B cell (primary cell): ENCODE measurements at regions of chr7 and their contacts with region 1.

Region 1: GRCh38 chr7:120805636-120806388 is 52.1 kb downstream of the TSPAN12 start:
- DNase-seq: peak; percentile 68
- ATAC-seq: no peak
- H3K4me3 ChIP-seq: no peak overlapping the region
- H3K4me3 Mint-ChIP-seq: no peak overlapping the region
- H3K27ac ChIP-seq: no peak overlapping the region
- H3K27ac Mint-ChIP-seq: no peak overlapping the region
- H3K4me1 ChIP-seq: no peaks in the 10 kb centered on the region
- H3K4me1 Mint-ChIP-seq: no peaks in the 10 kb centered on the region
- H3K27me3 ChIP-seq: no peaks in the 10 kb centered on the region
- H3K27me3 Mint-ChIP-seq: peaks cover 5% of the 10 kb centered on the region
- CTCF ChIP-seq: peak; percentile 95

Region 2: DNA sequence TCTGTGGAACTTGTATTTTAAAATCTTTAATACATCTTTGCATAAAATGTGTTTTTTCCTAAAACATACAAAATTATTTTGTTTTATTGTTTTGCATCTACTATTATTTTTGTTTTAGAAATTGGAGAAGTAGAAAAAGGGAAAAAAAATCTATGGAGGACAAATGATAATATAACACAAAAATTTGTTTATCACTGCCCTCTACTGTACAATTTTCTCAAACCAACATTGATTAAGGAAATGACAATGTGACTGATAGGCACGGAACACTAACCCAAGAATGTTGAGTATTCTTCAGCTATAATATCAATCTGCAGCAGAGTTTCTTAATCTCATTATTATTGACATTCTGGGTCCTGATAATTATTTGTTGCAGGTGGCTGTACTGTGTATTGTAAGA is 135.3 kb after region 1 on chr7:
- CTCF ChIA-PET with region 1: interaction called, 4 read pairs
- POLR2A ChIA-PET with region 1: no interaction called
- intact Hi-C with region 1: loop called (anchors 1 kb)
- DNase-seq: peak; percentile 36
- ATAC-seq: no peak
- H3K4me3 ChIP-seq: no peak overlapping the region
- H3K4me3 Mint-ChIP-seq: no peak overlapping the region
- H3K27ac ChIP-seq: no peak overlapping the region
- H3K27ac Mint-ChIP-seq: no peak overlapping the region
- H3K4me1 ChIP-seq: no peaks in the 10 kb centered on the region
- H3K4me1 Mint-ChIP-seq: no peaks in the 10 kb centered on the region
- H3K27me3 ChIP-seq: no peaks in the 10 kb centered on the region
- H3K27me3 Mint-ChIP-seq: peaks cover 4% of the 10 kb centered on the region
- CTCF ChIP-seq: peak; percentile 36

Region 3: DNA sequence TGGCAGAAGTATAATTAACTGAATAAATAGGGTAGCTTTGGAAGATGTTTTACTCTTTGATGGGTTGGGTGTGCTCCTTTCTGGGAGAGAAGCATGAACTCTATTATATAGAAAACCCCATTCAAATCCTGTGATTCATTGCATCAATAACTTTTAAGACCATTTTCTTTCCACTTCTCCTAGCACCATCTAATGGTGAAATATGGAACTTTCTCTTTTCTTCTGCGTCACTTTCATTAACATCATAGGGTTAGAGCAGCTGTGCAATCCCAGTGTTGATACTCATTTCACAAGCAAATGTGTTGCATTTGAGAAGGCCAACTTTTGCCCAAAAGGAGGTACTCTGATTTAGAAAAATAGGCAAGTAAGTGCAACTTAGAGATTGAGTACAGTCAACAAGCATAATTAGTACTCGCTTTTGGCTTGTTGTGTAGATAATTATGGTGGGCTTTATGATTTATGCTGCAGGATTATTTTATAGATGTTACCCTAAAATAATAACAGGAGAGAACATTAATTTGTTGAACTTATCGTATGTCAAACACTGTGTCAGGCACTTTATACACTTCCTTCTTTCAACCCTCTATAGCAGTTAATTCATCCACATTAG is 275.6 kb after region 1 on chr7:
- CTCF ChIA-PET with region 1: interaction called, 20 read pairs
- POLR2A ChIA-PET with region 1: no interaction called
- intact Hi-C with region 1: loop called (anchors 1 kb)
- DNase-seq: peak; percentile 62
- ATAC-seq: peak; percentile 76
- H3K4me3 ChIP-seq: no peak overlapping the region
- H3K4me3 Mint-ChIP-seq: no peak overlapping the region
- H3K27ac ChIP-seq: no peak overlapping the region
- H3K27ac Mint-ChIP-seq: no peak overlapping the region
- H3K4me1 ChIP-seq: peaks cover 2 to 9% of the 10 kb centered on the region in 2 donors
- H3K4me1 Mint-ChIP-seq: peaks cover 12% of the 10 kb centered on the region
- H3K27me3 ChIP-seq: no peaks in the 10 kb centered on the region
- H3K27me3 Mint-ChIP-seq: no peaks in the 10 kb centered on the region
- CTCF ChIP-seq: peak; percentile 80

Region 4: DNA sequence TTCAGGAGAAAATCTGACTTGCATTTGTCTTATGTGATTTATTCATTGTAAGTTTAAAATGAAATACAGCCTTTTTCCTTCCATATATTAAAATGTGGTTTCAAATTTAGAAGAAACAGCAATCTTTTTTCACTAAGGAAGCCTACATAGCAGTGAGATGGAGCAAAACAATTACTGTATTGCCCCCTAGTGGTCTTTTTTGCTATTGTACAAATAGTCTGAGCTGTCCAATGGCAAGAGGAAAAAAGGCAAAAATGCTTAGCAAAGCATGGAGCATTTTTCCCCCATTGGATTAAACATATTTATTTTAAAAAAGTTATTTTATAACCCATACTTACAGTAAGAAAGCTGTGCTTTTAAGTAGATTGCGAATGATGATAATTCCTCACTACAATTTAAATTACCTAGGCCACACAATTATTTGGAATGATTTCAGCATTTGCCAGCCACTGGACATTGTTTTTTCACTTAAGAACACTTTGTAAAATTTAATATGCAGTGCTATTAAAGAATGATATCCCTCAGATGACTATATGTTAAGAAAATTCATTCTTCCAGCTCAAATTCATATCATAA is 302.2 kb after region 1 on chr7:
- CTCF ChIA-PET with region 1: interaction called, 20 read pairs
- POLR2A ChIA-PET with region 1: no interaction called
- intact Hi-C with region 1: loop called (anchors 1 kb)
- DNase-seq: peak; percentile 67
- ATAC-seq: peak; percentile 78
- H3K4me3 ChIP-seq: no peak overlapping the region
- H3K4me3 Mint-ChIP-seq: no peak overlapping the region
- H3K27ac ChIP-seq: no peak overlapping the region
- H3K27ac Mint-ChIP-seq: no peak overlapping the region
- H3K4me1 ChIP-seq: no peaks in the 10 kb centered on the region
- H3K4me1 Mint-ChIP-seq: no peaks in the 10 kb centered on the region
- H3K27me3 ChIP-seq: no peaks in the 10 kb centered on the region
- H3K27me3 Mint-ChIP-seq: no peaks in the 10 kb centered on the region
- CTCF ChIP-seq: peak; percentile 98

Region 5: GRCh38 chr7:121994625-121995410 is 1189.0 kb after region 1 on chr7:
- CTCF ChIA-PET with region 1: interaction called, 10 read pairs
- POLR2A ChIA-PET with region 1: no interaction called
- intact Hi-C with region 1: loop called (anchors 2 kb)
- DNase-seq: peak; percentile 53
- ATAC-seq: peak; percentile 74
- H3K4me3 ChIP-seq: no peak overlapping the region
- H3K4me3 Mint-ChIP-seq: no peak overlapping the region
- H3K27ac ChIP-seq: no peak overlapping the region
- H3K27ac Mint-ChIP-seq: no peak overlapping the region
- H3K4me1 ChIP-seq: no peaks in the 10 kb centered on the region
- H3K4me1 Mint-ChIP-seq: no peaks in the 10 kb centered on the region
- H3K27me3 ChIP-seq: no peaks in the 10 kb centered on the region
- H3K27me3 Mint-ChIP-seq: peaks cover 3% of the 10 kb centered on the region
- CTCF ChIP-seq: peak; percentile 91